ENCODE measurements at regions of chr19 and their contacts with region 1.

Region 1: DNA sequence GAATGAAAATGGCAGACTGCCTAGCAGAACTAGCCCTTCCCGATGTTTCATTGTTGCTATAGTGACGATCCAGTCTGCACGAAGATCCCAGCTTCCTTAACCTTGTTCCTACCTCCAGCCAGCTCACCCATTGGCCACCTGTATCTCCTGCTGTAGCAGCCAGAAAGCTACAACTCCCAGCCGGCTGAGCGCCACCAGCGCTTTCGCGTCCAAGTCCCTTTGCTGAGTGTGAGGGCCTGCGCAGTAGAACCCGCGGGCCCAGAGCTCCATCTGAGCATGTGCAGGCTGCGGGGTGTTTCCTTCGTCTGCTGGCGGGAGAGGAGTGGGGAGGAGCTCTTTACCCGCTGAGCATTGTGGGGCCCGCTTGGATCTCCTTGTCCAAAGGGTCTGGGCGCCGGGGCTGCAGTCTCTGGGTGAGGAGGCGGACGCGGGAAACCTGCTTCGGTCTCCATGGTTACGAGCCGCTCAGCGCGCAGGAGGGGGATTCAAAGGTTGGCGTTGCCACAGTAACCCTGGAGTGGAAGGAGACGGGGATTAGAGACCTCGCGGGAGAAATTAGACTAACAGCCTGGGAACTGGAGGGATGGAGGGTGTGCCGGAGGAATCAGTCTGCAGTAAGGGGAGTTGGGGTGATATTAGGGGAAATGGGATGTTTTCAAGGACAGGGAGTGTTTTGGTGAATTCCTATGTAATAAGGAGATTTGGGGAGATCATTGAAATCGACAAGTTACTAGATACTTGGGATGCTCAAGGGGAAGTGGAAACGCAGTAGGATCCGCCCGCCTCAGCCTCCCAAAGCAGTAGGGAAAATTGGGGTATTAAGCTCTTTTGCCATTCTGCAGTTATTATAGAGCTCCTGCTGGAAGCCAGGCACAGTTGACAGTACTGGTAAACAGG is 33.5 kb downstream of the ZSWIM9 start:
- DNase-seq: peak; percentile 94 to 96
- H3K4me3 ChIP-seq: peak overlapping the region; percentile 53 to 68 (median 58)
- H3K27ac ChIP-seq: peak overlapping the region; percentile 81
- H3K4me1 ChIP-seq: peaks cover 0 to 7% (median 1%) of the 10 kb centered on the region in 4 experiments; a peak in 2 of 7 replicates
- H3K27me3 ChIP-seq: no peaks in the 10 kb centered on the region; a peak in 1 of 7 replicates
- CTCF ChIP-seq: no peak
- EP300 ChIP-seq: no peak
- POLR2A ChIP-seq: peak; percentile 63 to 75
- RAD21 ChIP-seq: no peak

Region 2: DNA sequence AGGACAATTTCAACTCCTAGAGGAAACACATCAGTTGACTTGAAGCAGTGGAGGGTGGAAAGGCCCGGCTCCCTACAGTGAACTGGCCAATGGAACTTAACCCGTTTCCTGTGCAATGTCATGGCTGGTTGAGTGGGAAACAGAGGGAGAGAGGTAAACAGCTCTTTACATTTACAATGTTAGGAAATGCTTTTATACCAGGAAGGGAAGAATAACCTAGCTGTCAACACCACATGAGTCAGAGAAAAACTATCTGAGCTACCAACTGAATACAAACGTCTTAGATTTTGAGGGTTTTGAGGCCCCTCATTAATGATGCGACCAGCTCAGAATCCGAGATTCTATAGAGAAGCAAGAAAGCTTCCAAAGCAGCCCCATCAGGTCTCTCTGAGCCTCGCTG is 15.0 kb after region 1 on chr19:
- CTCF ChIA-PET with region 1: interaction called, 68 read pairs
- POLR2A ChIA-PET with region 1: interaction called, 9 read pairs
- DNase-seq: no peak
- H3K4me3 ChIP-seq: no peak overlapping the region
- H3K27ac ChIP-seq: no peak overlapping the region
- H3K4me1 ChIP-seq: no peaks in the 10 kb centered on the region; a peak in 1 of 7 replicates
- H3K27me3 ChIP-seq: no peaks in the 10 kb centered on the region
- CTCF ChIP-seq: no peak
- EP300 ChIP-seq: no peak
- POLR2A ChIP-seq: no peak
- RAD21 ChIP-seq: no peak

Region 3: DNA sequence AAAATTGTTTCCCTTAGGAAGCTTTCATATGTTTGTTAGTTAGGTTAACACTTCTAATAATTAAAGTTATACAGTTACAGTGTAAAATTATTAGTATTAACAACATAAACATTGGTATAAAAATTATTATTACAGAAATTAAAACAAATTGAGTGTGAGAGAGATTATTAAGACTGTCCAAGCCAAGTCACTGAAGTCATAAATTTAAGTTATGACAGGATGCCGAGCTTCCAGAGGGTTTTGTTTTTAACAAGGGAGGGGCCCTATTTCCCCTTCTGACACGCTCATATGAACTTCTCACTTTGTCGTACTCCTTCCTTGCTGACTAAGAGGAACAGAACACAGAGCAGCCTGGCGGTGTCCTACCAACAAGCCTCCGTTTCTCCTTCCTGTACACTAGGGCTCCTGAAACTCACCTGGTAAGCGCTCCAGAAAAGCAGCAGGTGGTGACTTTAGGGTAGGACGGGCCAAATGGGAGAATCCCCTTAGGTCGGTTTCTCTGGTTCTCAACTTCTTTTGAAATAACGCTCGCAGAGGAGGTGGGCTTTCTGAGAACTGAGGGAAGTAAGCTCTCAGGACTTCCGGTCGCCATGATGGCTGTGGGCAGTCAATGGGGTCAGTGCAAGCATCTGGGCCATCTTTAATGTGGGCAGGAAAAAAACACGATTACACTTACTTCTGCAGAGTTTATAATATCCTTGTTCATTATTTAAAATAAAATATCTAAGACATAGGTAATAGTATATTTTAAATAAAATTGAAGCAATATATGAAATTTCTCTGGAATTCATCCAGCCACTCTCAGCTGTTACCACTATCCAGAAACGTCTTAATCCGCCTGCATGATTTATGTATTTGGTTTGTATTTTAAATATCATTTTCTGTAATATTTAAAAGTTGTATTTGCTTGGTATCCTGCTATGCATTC is 51.7 kb after region 1 on chr19 and contains the start of gene CARD8:
- CTCF ChIA-PET with region 1: interaction called, 18 read pairs
- POLR2A ChIA-PET with region 1: interaction called, 3 read pairs
- DNase-seq: peak; percentile 53 to 70
- H3K4me3 ChIP-seq: peak within 1 kb of the TSS; percentile 66 to 83 (median 78)
- H3K27ac ChIP-seq: peak within 1 kb of the TSS; percentile 74
- H3K4me1 ChIP-seq: no peaks in the 10 kb centered on the region
- H3K27me3 ChIP-seq: no peaks in the 10 kb centered on the region
- CTCF ChIP-seq: no peak
- EP300 ChIP-seq: no peak
- POLR2A ChIP-seq: peak; percentile 62 to 87
- RAD21 ChIP-seq: no peak
- total RNA-seq, gene CARD8: 24.4 and 26.2 TPM in 2 replicates

Region 4: GRCh38 chr19:48325244-48325910 is 121.4 kb after region 1 on chr19 and contains the start of gene EMP3:
- CTCF ChIA-PET with region 1: no interaction called
- POLR2A ChIA-PET with region 1: no interaction called
- DNase-seq: peak in 1 of 2 experiments; percentile 78
- H3K4me3 ChIP-seq: peak within 1 kb of the TSS; percentile 24 to 55 (median 34); a peak in 6 of 8 replicates
- H3K27ac ChIP-seq: no peak within 1 kb of the TSS
- H3K4me1 ChIP-seq: peaks cover 0 to 14% (median 8%) of the 10 kb centered on the region in 4 experiments; a peak in 6 of 7 replicates
- H3K27me3 ChIP-seq: peaks cover 0 to 5% (median 2%) of the 10 kb centered on the region in 4 experiments; a peak in 1 of 7 replicates
- CTCF ChIP-seq: no peak
- EP300 ChIP-seq: no peak
- POLR2A ChIP-seq: no peak
- RAD21 ChIP-seq: no peak
- total RNA-seq, gene EMP3: 18.4 and 20.9 TPM in 2 replicates

Measured in H1 (cell line).